Naive thymus-derived CD4-positive, alpha-beta T cell (primary cell): ENCODE measurements at regions of chr1 and their contacts with region 1.

Region 1: DNA sequence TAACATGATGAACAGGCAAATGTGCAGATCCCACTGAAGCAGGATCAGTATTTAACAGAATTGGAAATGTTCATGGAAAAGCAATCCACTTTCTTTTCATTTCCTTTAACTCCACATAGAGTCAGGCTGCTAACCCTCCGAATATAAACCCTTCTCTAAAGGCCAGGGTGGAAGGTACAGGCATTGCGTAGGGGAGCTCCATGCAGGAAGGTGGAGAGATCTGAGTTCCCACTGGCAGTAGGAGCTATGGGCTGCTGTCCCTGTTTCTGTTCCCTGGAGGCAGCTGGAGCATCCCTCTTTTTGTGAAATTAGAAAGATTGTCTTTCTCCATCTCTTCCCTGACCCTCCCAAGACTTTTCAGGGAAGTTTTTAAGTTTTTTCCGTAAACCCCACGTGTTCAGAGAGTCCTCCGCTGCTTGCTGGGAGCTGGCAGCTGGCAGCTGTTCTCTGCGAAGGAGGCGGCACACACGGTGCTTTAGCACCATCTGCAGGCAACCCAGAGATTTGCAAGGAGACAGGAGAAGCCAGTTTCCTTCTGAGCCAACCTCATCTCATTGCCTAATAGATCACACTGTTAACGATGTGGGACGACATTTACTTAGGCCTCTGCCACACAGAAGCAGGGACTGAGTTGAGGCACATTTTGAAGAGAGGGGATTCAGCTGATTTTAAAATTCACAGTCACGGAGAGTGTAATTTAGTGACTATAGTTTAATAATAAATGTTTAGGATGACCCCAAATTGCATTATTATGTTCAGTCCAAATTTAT is 55.4 kb upstream of the HOOK1 start:
- DNase-seq: peak; percentile 46 to 76 (median 64)
- ATAC-seq: peak; percentile 95
- H3K4me3 ChIP-seq: no peak overlapping the region
- H3K4me3 Mint-ChIP-seq: peak overlapping the region in 7 of 10 donors; percentile 9 to 64 (median 37)
- H3K27ac ChIP-seq: no peak overlapping the region
- H3K27ac Mint-ChIP-seq: peak overlapping the region in 2 of 9 donors; percentile 24 to 32
- H3K4me1 ChIP-seq: no peaks in the 10 kb centered on the region
- H3K4me1 Mint-ChIP-seq: peaks cover 0 to 8% (median 4%) of the 10 kb centered on the region in 7 donors
- H3K27me3 ChIP-seq: no peaks in the 10 kb centered on the region
- H3K27me3 Mint-ChIP-seq: no peaks in the 10 kb centered on the region

Region 2: DNA sequence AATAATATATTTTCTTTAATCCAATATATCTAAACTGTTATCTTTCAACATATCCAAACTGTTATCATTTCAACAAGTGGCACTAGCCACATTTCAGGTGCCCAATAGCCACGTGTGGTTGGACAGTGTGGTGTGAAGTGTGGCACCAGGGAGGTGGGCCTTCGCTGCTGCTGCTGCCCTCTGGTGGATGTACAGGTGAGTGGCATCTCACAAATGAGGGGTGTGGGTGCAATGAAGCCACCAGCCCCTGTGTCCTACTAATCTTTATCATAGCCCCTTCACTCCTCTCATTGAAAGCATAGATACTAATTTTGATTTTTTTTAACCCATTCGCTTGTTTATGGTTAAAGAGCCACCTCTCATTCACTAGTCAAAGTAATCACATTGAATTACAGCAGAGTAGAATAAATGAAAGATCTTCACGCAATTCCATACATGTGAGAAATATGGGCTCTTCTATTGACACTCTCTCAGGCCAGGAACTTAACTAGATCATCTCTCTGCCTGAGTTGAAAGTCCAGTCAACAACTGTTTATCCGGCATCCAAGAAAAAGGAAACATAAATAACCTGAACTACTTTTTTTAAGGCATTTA is 1712.0 kb before region 1 on chr1:
- CTCF ChIA-PET with region 1: no interaction called
- POLR2A ChIA-PET with region 1: no interaction called
- intact Hi-C with region 1: loop called in 1 of 2 experiments (anchors 5 kb)
- DNase-seq: peak in 3 of 9 donors; percentile 4 to 7 (median 6)
- ATAC-seq: no peak
- H3K4me3 ChIP-seq: no peak overlapping the region
- H3K4me3 Mint-ChIP-seq: no peak overlapping the region
- H3K27ac ChIP-seq: no peak overlapping the region
- H3K27ac Mint-ChIP-seq: no peak overlapping the region
- H3K4me1 ChIP-seq: no peaks in the 10 kb centered on the region
- H3K4me1 Mint-ChIP-seq: no peaks in the 10 kb centered on the region
- H3K27me3 ChIP-seq: no peaks in the 10 kb centered on the region
- H3K27me3 Mint-ChIP-seq: no peaks in the 10 kb centered on the region

Region 3: GRCh38 chr1:58515794-58516401 is 1243.4 kb before region 1 on chr1:
- CTCF ChIA-PET with region 1: interaction called, 5 read pairs
- POLR2A ChIA-PET with region 1: no interaction called
- intact Hi-C with region 1: loop called (anchors 1 kb)
- DNase-seq: peak in 7 of 9 donors; percentile 30 to 63 (median 53)
- ATAC-seq: peak; percentile 80
- H3K4me3 ChIP-seq: no peak overlapping the region
- H3K4me3 Mint-ChIP-seq: no peak overlapping the region
- H3K27ac ChIP-seq: no peak overlapping the region
- H3K27ac Mint-ChIP-seq: peak overlapping the region; percentile 11 to 84 (median 78)
- H3K4me1 ChIP-seq: no peaks in the 10 kb centered on the region
- H3K4me1 Mint-ChIP-seq: peaks cover 0 to 28% (median 8%) of the 10 kb centered on the region in 7 donors
- H3K27me3 ChIP-seq: no peaks in the 10 kb centered on the region
- H3K27me3 Mint-ChIP-seq: no peaks in the 10 kb centered on the region

Region 4: DNA sequence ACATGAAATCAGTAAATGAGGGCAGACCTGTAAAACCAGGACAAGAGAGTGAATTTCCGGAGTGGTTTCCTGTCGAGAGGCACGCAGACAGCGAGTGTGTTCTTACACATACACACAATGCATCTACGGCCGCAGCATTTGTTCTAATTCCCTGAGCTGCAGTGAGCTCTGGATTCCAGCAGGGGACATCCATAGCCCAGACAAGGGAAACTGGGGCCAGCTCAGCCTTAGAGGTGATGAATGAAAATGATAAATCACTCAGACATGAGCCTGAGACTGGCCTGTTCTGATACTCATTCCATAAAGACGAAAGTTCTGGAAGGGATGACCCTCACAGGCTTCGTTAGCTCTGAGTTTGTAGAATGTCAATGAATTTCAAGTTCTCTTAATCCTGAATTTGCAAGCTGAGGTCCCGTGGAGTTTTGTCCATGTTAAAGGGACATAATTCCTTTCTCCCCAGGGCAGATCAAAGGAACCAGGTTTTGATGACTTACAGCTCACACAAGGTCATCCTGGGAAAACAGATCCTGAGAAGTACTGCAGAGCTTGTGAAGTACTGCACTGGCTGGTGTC is 522.1 kb after region 1 on chr1:
- CTCF ChIA-PET with region 1: no interaction called
- POLR2A ChIA-PET with region 1: no interaction called
- intact Hi-C with region 1: no loop called
- DNase-seq: peak in 1 of 9 donors; percentile 1
- ATAC-seq: no peak
- H3K4me3 ChIP-seq: no peak overlapping the region
- H3K4me3 Mint-ChIP-seq: no peak overlapping the region
- H3K27ac ChIP-seq: no peak overlapping the region
- H3K27ac Mint-ChIP-seq: no peak overlapping the region
- H3K4me1 ChIP-seq: no peaks in the 10 kb centered on the region
- H3K4me1 Mint-ChIP-seq: peaks cover 0 to 14% (median 8%) of the 10 kb centered on the region in 7 donors
- H3K27me3 ChIP-seq: no peaks in the 10 kb centered on the region
- H3K27me3 Mint-ChIP-seq: no peaks in the 10 kb centered on the region